ENCODE measurements at regions of chr19 and their contacts with region 1.

Region 1: GRCh38 chr19:23378948-23379347 is 16.3 kb downstream of the ZNF91 start:
- DNase-seq: no peak
- ATAC-seq: no peak
- H3K4me3 ChIP-seq: no peak overlapping the region
- H3K27ac ChIP-seq: no peak overlapping the region
- H3K4me1 ChIP-seq: peaks cover 0 to 8% of the 10 kb centered on the region in 2 donors
- H3K27me3 ChIP-seq: no peaks in the 10 kb centered on the region
- CTCF ChIP-seq: no peak
- POLR2A ChIP-seq: no peak

Region 2: DNA sequence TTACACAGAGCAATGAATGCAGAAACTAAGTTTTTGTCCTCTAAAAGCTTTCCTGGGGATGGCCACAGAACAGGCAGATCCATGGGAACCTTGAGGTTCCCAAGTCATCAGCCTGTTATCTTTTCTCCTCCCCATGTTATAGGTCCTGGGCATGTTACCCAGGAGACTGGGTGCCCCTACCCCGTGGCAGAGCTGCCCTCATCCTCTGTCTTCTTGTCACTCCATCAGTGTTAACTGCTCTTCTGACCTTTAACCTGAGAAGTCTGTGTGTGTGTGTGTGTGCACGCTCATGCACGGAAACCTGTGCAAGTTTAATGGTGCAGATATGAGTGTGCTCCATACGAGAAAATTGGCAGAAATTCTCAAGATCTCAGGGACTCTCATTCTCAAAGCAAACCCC is 84.8 kb before region 1 on chr19:
- in situ Hi-C with region 1: no loop called
- intact Hi-C with region 1: no loop called
- DNase-seq: no peak
- ATAC-seq: no peak
- H3K4me3 ChIP-seq: no peak overlapping the region
- H3K27ac ChIP-seq: no peak overlapping the region
- H3K4me1 ChIP-seq: no peaks in the 10 kb centered on the region
- H3K27me3 ChIP-seq: no peaks in the 10 kb centered on the region
- CTCF ChIP-seq: no peak
- POLR2A ChIP-seq: no peak

Region 3: GRCh38 chr19:23799321-23799720 is 420.4 kb after region 1 on chr19:
- in situ Hi-C with region 1: no loop called
- intact Hi-C with region 1: loop called (anchors 5 kb)
- DNase-seq: no peak
- ATAC-seq: no peak
- H3K4me3 ChIP-seq: no peak overlapping the region
- H3K27ac ChIP-seq: no peak overlapping the region
- H3K4me1 ChIP-seq: no peaks in the 10 kb centered on the region
- H3K27me3 ChIP-seq: no peaks in the 10 kb centered on the region
- CTCF ChIP-seq: no peak
- POLR2A ChIP-seq: no peak